ENCODE measurements at regions of chr19 and their contacts with region 1.

Region 1: DNA sequence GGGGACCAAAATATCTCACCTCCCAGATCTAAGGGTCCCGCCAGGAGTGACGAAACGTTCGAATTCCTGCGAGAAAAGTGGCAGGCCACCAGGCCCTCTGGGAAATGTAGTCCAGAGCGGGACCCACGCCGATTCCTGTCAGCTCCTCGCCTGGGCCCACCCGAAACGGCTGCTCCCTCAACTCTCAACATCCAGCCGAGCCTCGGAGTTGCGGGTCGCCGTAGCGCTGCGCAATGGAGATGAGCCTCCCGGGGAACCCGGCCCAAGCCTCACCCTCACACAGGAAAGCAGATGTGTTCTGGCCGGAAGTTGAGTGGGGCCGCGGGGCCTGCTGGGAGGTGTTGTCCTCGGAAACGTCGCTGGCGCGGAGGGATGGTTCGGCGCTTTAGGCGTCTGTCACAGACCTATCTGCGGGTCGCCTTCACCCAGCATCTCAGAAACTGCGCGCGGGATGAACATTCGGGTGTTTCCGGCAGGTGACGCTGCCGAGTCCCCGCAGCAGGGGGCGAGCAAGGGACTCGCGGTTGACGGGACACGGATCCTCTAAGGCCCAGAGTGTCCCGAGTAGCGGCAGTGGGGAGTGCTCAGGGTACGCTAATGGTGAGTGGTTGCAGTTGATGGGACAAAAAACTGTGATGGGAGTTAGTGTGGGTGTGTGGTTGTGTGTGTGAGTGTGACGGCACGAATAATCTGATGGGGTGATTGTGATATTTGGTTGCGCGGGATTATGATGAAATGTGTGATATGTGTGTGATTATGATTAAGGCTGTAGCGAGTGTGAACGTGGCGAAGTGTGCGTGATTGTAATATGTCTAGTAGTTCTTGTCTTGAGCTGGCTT is at the starts of genes ZNF568 and ZNF829:
- DNase-seq: peak; percentile 88
- H3K4me3 ChIP-seq: peak within 1 kb of the TSS; percentile 4 to 99 (median 50)
- H3K27ac ChIP-seq: peak within 1 kb of the TSS; percentile 67
- H3K4me1 ChIP-seq: no peaks in the 10 kb centered on the region
- H3K27me3 ChIP-seq: no peaks in the 10 kb centered on the region
- CTCF ChIP-seq: peak; percentile 63 to 80
- POLR2A ChIP-seq: no peak
- total RNA-seq, gene ZNF568: 4.1 and 6.4 TPM in 2 replicates
- total RNA-seq, gene ZNF829: 1.2 and 1.3 TPM in 2 replicates

Region 2: GRCh38 chr19:36665832-36666231 is 250.4 kb before region 1 on chr19:
- CTCF ChIA-PET with region 1: no interaction called
- POLR2A ChIA-PET with region 1: no interaction called
- dilution Hi-C with region 1: no loop called
- intact Hi-C with region 1: loop called (anchors 1 kb)
- DNase-seq: no peak
- H3K4me3 ChIP-seq: peak overlapping the region; percentile 58 to 94 (median 86)
- H3K27ac ChIP-seq: no peak overlapping the region
- H3K4me1 ChIP-seq: no peaks in the 10 kb centered on the region
- H3K27me3 ChIP-seq: no peaks in the 10 kb centered on the region
- CTCF ChIP-seq: no peak
- POLR2A ChIP-seq: no peak

Region 3: DNA sequence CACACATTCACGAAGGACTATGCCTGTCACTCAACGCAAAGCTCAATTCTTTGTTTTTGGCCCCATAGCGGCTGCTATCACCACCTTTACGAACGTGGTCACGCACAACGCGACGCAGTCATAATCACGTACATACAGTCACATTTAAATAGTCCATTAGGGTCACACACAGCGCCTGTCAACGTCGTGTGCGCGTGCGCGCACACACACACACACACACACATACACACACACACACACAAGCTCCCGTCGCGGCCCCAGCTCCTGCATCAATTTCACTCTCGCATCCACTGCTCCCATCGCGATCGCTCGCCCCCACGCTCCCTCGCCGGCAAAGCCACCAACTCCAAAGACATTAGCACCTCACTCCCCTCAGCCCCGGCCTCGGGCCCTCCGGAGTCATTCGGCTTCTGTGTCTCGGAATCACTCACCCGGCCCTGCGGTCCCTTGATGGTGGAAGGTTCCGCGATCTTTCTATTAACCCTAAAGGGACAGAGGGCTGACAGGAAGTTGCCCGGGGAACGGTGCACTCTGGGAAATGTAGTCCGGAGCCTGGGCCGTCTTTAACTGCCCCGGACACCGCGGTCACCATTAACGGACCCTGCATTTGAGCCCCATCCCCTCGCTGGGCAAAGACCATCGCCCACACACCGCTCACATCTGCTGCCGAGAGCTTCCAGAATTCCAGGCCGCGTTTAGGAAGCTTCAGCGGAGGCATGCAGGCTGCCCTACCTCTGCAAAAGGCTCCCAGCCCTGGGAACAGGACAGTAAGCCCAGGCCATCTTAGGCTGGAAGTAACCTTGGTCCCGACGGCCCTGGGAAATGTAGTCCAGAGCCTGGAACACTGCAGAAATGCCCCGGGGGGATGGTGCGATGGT is 78.1 kb before region 1 on chr19 and contains the start of gene ZNF790:
- CTCF ChIA-PET with region 1: no interaction called
- POLR2A ChIA-PET with region 1: no interaction called
- dilution Hi-C with region 1: no loop called
- intact Hi-C with region 1: loop called (anchors 2 kb)
- DNase-seq: peak; percentile 91
- H3K4me3 ChIP-seq: peak within 1 kb of the TSS; percentile 37 to 64 (median 43)
- H3K27ac ChIP-seq: peak within 1 kb of the TSS; percentile 44
- H3K4me1 ChIP-seq: peaks cover 3% of the 10 kb centered on the region
- H3K27me3 ChIP-seq: no peaks in the 10 kb centered on the region
- CTCF ChIP-seq: no peak
- POLR2A ChIP-seq: peak; percentile 44
- total RNA-seq, gene ZNF790: 5.2 and 5.6 TPM in 2 replicates

Region 4: DNA sequence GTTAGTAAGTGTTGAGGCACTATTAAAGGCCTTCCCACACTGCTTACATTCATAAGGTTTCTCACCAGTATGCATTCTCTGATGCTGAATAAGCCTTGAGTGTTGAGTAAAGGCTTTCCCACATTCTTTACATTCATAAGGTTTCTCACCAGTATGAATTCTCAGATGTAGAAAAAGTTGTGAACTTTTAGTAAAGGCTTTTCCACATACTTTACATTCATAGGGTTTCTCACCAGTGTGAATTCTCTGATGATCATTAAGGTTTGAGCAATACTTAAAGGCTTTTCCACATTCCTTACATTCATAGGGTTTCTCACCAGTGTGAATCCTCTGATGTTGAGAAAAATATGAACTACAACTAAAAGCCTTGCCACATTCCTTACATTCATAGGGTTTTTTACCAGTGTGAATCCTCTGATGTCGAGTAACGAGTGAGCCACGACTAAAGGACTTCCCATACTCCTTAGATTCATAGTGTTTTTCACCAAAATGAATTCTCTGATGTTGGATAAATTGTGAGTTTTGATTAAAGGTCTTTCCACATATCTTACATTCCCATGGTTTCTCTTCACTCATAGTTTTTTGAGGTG is 24.3 kb before region 1 on chr19:
- CTCF ChIA-PET with region 1: no interaction called
- POLR2A ChIA-PET with region 1: no interaction called
- dilution Hi-C with region 1: no loop called
- intact Hi-C with region 1: no loop called
- DNase-seq: no peak
- H3K4me3 ChIP-seq: no peak overlapping the region
- H3K27ac ChIP-seq: no peak overlapping the region
- H3K4me1 ChIP-seq: no peaks in the 10 kb centered on the region
- H3K27me3 ChIP-seq: no peaks in the 10 kb centered on the region
- CTCF ChIP-seq: no peak
- POLR2A ChIP-seq: no peak

Region 5: DNA sequence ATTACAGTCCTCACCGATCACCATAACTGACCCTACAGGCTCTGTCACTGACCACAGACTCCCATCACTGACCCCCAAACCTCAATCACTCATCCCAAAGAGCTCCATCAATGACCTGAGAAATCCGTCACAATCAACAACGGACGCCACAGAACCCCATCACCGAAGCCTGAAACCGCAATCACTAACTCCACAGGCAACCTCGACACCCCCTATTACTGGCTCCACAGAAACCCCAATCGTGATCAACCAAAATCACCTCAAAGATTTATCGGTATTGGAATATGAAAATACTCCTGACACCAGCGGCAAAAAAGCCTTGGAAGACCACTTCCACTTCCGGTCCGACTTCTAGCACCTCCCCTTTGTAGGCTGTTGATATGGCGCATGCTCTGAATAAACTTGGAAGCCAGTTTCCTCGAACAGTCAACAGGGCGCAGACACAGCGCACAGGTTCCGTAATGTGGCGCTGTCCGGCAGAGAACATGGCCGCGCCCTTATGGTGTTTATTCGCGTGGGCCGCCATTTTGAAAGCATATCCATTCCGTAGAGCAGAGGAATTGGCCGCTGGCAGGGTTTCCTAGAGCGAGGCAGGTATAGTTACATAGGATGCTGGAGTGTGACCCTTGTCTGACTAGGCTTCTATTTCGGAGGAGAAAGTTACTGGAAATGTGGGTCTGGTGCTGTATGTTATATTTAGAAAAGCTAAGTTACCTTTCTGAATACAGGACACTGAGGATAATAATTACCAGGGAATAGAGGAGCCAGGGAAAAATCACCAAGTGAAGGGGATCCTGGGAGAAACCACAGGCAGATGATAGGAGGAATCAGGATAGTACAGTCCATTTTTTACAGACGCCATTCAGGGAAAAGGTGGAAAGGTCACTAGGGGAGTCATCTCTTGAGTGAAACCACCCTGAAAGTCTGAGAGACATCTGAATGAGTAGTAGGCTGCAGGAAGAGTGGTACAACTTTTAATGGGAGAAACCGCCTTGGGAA is 256.5 kb after region 1 on chr19 and contains the start of gene ZNF585A:
- CTCF ChIA-PET with region 1: no interaction called
- POLR2A ChIA-PET with region 1: no interaction called
- dilution Hi-C with region 1: no loop called
- intact Hi-C with region 1: loop called (anchors 2 kb)
- DNase-seq: peak; percentile 97
- H3K4me3 ChIP-seq: peak within 1 kb of the TSS; percentile 49 to 95 (median 81)
- H3K27ac ChIP-seq: no peak within 1 kb of the TSS
- H3K4me1 ChIP-seq: peaks cover 3% of the 10 kb centered on the region
- H3K27me3 ChIP-seq: no peaks in the 10 kb centered on the region
- CTCF ChIP-seq: peak in 1 of 2 donors; percentile 24
- POLR2A ChIP-seq: peak; percentile 60
- total RNA-seq, gene ZNF585A: 6.0 and 6.7 TPM in 2 replicates

Measured in endothelial cell of umbilical vein (primary cell).